Right cardiac atrium (tissue), 5 donors: ENCODE measurements at regions of chrX and their contacts with region 1.

Region 1: DNA sequence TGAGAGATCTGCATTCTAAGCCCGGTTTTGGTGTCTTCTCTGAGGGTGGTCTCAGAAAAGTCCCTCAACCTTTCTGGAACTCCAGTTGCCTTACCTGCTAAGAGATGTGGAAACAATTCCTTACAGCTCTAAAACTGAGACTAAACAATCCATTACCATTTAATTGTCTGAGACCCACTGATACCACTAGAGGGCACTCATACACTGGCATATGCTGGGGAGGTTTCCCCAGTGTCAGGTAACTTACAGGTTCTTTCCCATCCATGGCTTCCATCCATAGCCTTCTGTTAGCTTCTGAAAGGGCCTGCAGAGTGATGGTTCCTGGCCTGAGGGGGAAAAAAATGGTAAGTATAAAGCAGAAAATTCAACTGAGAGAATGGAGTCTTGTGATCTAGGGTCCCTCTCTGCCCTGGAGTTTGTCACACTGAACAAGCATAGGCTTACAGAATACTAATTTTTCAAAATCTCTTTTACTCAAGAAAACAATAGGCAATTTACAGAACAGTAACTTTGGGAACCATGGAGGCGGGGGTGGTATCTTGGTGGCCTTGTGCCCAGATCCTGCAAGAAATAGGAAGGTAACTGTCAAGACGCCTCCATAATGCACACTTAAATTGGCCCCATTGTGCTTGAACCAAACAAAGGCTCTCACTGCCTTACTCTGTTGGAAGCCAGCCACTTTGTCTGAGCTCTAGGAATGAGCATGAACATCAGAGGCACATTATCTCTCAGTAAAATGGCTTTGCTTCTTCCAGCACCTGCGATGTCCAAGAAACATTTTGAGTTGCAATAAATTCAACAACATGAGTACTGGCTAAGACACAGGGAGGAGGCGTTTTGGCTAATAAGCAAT is 236.1 kb downstream of the OPHN1 start:
- DNase-seq: no peak
- ATAC-seq: peak in 1 of 2 donors; percentile 61
- H3K4me3 ChIP-seq: no peak overlapping the region
- H3K27ac ChIP-seq: no peak overlapping the region
- H3K4me1 ChIP-seq: no peaks in the 10 kb centered on the region
- H3K27me3 ChIP-seq: no peaks in the 10 kb centered on the region

Region 2: GRCh38 chrX:68098431-68098830 is 98.7 kb before region 1 on chrX:
- intact Hi-C with region 1: no loop called
- DNase-seq: no peak
- ATAC-seq: no peak
- H3K4me3 ChIP-seq: no peak overlapping the region
- H3K27ac ChIP-seq: no peak overlapping the region
- H3K4me1 ChIP-seq: no peaks in the 10 kb centered on the region
- H3K27me3 ChIP-seq: no peaks in the 10 kb centered on the region

Region 3: GRCh38 chrX:68121371-68121770 is 75.8 kb before region 1 on chrX:
- intact Hi-C with region 1: no loop called
- DNase-seq: no peak
- ATAC-seq: no peak
- H3K4me3 ChIP-seq: no peak overlapping the region
- H3K27ac ChIP-seq: no peak overlapping the region
- H3K4me1 ChIP-seq: no peaks in the 10 kb centered on the region
- H3K27me3 ChIP-seq: no peaks in the 10 kb centered on the region

Region 4: GRCh38 chrX:68462653-68463052 is 265.5 kb after region 1 on chrX:
- intact Hi-C with region 1: loop called (anchors 5 to 10 kb)
- DNase-seq: no peak
- ATAC-seq: peak in 1 of 2 donors; percentile 45
- H3K4me3 ChIP-seq: no peak overlapping the region
- H3K27ac ChIP-seq: no peak overlapping the region
- H3K4me1 ChIP-seq: peaks cover 2% of the 10 kb centered on the region
- H3K27me3 ChIP-seq: no peaks in the 10 kb centered on the region

Region 5: DNA sequence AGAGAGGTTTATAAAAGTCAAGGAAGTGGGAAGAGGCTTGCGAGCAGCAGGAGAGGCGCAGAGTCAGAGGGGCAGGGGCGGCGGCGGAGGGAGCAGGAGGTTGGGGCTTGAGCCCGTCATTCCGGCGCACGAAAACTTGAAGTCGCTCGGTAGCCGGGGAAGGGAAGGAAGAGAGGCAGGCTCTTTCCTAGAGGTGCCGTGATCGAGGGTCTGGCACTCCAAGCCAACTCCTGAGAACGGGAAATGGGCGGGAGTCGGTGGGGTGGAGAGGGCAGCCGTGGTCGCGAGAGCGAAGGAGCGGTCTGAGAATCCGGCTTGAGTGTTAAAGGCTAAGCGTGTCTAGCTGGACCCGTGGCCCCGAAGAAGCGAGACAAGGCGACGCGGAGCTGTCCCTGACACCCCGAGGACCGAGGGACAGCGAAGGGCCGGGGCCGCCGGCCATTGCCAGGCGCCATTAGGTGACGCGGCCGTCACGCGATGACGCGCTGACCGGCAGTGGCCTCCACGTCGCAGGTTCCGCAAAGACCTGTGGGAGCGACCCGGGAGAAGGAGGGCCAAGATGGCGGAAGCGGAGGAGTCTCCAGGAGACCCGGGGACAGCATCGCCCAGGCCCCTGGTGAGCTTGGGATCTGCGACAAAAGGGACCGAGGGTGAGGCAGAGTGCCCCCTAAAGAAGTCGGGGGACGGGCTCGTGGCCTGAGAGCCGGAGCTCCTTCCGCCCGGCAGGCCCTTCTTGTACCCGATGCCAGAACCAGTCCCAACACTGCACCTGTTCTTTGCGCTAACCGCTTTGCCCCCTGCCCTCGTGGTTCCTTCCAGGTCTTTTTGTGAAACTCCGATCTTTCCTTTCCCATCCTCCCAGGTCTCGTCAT is 301.6 kb after region 1 on chrX and contains the start of gene YIPF6:
- intact Hi-C with region 1: no loop called
- DNase-seq: peak; percentile 81 to 91 (median 91)
- ATAC-seq: peak; percentile 98
- H3K4me3 ChIP-seq: peak within 1 kb of the TSS; percentile 76
- H3K27ac ChIP-seq: peak within 1 kb of the TSS; percentile 95
- H3K4me1 ChIP-seq: no peaks in the 10 kb centered on the region
- H3K27me3 ChIP-seq: no peaks in the 10 kb centered on the region
- total RNA-seq, gene YIPF6: 24.9 to 32.4 (median 25.8) TPM